Right ventricle myocardium inferior (tissue), 1 donor: ENCODE measurements at regions of chr15 and their contacts with region 1.

Region 1: DNA sequence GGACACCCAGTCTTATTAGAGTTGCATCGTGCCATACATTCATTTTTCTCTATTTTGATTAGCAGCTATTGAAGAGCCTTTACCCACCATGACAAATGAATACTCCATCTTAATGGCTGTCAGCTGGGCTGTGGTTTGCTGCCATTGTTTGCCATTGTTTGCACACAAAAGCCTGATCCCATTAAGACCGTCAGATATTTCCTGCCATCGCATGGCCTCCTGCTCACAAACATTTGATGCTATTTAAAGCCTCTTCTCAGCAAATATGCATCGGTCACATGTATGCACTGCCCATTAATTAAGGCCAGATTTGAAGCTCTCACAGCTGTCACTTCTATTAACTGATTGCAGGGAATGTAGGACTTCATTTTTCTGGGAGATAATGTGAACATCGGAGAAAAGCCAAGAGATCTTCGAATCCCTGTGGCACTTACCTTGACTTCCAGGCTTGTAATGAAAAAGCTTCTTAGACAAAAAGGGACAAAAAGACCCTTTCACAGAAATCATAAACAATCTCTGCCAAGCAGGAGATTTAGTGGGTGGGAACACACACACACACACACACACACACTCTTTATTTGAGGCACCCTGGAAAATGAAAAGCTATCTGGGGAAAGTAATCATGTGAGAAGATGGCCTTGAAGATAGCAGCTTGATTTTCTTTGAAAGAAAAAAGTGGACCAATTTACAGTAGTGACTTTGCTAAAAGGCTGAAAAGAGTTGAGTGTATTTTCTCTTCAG is 175.4 kb upstream of the NR2E3 start:
- DNase-seq: no peak
- ATAC-seq: peak; percentile 12

Region 2: DNA sequence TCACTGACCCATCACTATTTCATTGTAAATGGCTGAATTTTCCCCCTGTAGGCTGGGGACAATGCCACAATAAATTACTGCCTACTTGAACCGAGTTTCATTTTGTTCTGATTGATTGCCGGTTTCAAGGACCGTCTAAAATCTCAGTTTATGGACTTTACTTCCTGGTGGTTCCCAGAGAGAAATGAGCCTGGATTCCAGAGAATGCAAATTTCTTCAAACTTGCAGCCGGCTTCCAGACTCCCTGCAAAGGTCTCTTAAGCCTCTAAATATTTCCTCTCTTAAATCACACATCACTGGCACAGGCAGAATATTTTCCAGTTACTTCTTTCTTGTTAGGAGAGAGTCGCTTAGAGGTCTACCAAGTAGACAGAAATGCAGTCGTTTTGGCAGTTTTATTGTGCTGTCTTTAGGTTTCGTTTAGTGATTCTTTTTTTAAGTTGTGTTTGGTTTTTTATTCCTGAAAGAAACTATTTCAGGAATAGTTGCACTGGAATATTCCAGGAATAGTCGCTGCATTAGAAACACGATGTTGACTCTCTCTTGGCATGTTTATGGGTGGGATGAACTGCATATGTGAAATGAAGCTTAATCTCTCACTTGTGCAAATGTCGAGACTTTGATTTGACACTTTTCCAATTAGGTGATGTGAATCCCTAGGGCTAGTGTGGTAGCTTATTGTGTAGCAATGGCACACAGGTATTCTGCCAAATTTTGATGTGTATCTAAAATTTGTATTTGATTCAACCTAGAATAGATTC is 108.8 kb before region 1 on chr15:
- intact Hi-C with region 1: no loop called
- DNase-seq: no peak
- ATAC-seq: no peak

Region 3: GRCh38 chr15:71575474-71576045 is 59.4 kb before region 1 on chr15:
- intact Hi-C with region 1: loop called (anchors 5 kb)
- DNase-seq: no peak
- ATAC-seq: no peak

Region 4: GRCh38 chr15:71623111-71623510 is 11.9 kb before region 1 on chr15:
- intact Hi-C with region 1: no loop called
- DNase-seq: no peak
- ATAC-seq: no peak

Region 5: GRCh38 chr15:71679223-71680053 is 44.4 kb after region 1 on chr15:
- intact Hi-C with region 1: no loop called
- DNase-seq: no peak
- ATAC-seq: no peak

Region 6: GRCh38 chr15:72112116-72112515 is 477.1 kb after region 1 on chr15:
- intact Hi-C with region 1: no loop called
- DNase-seq: no peak
- ATAC-seq: no peak